Activated naive CD4-positive, alpha-beta T cell treated with anti-CD3 and anti-CD28 coated beads for 36 hours (primary cell): ENCODE measurements at regions of chr5 and their contacts with region 1.

Region 1: DNA sequence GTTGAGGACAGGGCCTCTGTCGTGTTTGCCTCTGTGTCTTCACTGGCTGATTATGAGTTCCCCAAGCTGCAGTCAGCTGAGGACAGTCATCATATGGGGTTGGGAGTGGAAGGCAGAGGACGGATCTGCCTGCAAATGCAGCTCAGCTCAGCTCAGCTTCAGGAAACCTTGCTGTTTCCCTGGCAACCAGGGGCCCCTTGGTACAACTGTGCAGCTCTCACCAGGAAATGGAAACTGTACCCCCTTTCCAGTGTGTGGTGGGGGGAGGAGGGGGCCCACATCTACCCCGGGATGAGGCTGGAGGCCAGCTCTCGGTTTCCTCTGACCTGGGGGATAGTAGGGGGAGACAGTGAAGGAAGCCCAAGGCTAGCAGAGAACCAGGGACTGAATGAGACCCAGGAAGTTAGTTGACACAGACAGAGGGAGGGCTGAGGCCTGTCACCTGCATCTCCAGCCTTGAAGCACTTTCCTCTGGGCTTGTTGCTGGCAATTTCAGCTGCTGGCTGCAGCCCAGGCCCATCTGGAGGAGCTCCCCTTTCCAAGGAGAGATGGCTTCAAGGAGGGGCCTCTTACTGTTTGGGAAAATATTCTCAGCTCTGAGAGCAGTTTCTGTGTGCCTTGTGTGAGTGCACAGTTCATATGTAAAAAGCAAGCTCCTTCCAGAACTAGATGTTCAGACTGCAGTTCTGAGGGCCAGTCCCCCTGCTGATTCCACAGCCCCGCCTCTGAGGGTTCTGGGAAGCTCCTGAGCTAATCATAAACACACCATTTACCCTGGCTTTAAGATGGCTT is 6.9 kb downstream of the ANXA6 start:
- DNase-seq: peak; percentile 91
- H3K4me3 Mint-ChIP-seq: peak overlapping the region; percentile 64
- H3K27ac Mint-ChIP-seq: peak overlapping the region; percentile 90
- H3K4me1 Mint-ChIP-seq: peaks cover 94% of the 10 kb centered on the region
- H3K27me3 Mint-ChIP-seq: no peaks in the 10 kb centered on the region

Region 2: GRCh38 chr5:150554857-150555256 is 595.8 kb before region 1 on chr5:
- CTCF ChIA-PET with region 1: no interaction called
- intact Hi-C with region 1: no loop called
- DNase-seq: no peak
- H3K4me3 Mint-ChIP-seq: no peak overlapping the region
- H3K27ac Mint-ChIP-seq: no peak overlapping the region
- H3K4me1 Mint-ChIP-seq: no peaks in the 10 kb centered on the region
- H3K27me3 Mint-ChIP-seq: no peaks in the 10 kb centered on the region

Region 3: DNA sequence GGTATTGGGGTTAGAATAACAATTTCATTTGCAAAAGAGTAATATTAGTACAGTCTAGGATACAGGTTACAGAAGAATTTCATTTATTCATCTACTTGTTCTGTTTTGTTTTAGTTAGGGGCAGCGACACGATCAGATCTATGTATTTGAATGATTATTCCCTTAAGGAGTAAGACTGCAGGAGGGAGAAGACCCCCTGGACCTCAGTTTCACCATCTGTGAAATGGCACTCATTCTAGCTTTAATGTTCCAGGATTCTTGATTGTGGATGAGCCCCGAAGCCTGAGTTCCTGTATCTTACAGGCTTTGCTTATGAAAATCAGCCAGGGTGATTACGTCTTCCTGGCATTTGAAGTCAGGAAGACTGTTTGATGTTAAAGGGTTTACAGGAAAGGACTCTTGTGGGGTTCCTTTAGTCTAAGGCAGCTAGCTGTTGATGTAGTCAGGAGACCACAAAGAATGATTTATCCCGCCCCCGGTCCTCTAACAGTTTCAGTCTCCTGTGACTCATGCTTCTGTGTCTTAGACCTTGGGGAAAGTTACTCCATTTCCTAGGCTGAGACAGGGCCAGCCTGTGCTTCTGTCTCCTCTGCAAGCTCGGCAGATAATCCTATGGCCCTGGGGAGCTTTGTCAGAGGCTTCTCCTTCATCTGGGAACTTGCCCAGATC is 360.6 kb before region 1 on chr5:
- CTCF ChIA-PET with region 1: no interaction called
- intact Hi-C with region 1: loop called (anchors 2 kb)
- DNase-seq: peak; percentile 92
- H3K4me3 Mint-ChIP-seq: peak overlapping the region; percentile 64
- H3K27ac Mint-ChIP-seq: peak overlapping the region; percentile 97
- H3K4me1 Mint-ChIP-seq: peaks cover 65% of the 10 kb centered on the region
- H3K27me3 Mint-ChIP-seq: no peaks in the 10 kb centered on the region